ENCODE measurements at regions of chr2 and their contacts with region 1.

Region 1: DNA sequence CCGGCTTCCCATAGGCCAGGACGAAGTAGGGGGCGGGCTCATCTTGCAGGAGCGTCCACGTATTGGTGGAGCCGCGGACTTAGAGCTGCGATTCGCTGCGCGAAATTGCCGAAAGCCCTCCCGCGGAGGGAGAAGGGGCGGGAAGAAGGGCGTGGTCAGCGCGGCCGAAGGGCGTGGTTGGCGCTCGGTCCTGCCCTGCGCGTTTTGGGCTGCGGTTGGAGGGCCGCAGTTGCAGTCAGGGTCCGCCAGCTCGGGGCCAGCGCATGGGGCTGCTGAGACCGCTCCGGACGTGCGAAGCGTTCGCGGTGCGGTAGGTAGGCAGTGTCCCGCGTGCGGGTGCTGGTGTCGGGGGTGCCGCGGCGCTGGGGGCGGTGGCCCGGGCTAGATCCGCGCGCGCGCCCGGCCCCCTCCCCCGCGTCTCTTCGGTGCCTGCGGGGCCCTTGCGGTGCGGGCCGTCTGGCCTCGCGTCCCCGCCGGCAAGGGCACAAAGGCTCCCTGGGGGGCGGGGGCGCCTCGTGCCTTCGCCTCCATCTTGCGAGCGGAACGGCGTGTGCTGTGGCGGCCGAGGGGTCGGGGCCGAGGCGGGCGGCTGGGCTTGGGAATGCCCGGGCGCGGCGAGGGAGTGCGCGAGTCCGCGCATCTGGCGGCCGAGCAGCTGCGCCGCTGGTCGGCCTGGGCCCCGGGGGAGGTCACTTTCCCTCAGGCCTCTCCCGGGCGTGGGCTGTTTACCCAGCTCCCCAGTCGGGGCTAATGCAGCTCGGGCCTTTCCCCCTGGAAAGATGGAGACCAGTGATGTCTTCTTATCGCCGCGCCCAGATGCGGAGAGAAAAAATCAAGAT is at the start of gene CEP68:
- DNase-seq: peak; percentile 97 to 98
- H3K4me3 ChIP-seq: peak within 1 kb of the TSS; percentile 89 to 99
- H3K27ac ChIP-seq: peak within 1 kb of the TSS; percentile 84 to 91
- H3K4me1 ChIP-seq: peaks cover 0 to 50% (median 26%) of the 10 kb centered on the region in 4 donors
- H3K27me3 ChIP-seq: no peaks in the 10 kb centered on the region
- CTCF ChIP-seq: no peak

Region 2: DNA sequence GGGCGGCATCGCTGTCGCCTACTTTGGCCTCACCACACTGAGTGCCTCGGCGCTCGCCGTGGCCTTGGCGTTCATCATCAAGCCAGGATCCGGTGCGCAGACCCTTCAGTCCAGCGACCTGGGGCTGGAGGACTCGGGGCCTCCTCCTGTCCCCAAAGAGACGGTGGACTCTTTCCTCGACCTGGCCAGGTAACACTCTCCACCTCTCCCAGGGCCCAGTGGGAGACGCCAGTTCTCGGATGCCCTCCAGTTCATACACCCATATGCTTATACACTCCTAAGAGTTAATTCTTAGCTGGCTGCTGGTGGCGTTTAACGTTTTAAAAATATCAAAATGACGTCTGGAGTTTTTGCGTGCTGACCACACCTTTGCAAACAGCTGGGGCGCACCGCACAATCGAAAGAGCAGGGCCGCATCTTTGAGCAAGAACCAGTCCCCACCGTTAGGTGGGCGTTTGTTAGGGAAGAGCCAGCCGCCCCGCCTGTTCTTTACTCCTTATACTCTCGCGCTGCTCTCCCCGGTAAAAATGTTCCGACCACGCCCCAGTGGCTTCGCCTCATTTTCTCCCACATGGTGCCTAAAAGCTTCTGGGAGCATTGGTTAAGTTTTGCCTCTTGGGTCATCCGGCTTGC is 66.3 kb before region 1 on chr2:
- intact Hi-C with region 1: loop called (anchors 10 kb)
- DNase-seq: peak; percentile 23 to 69
- H3K4me3 ChIP-seq: peak overlapping the region; percentile 75 to 90
- H3K27ac ChIP-seq: peak overlapping the region; percentile 82 to 94
- H3K4me1 ChIP-seq: peaks cover 0 to 52% (median 31%) of the 10 kb centered on the region in 4 donors
- H3K27me3 ChIP-seq: no peaks in the 10 kb centered on the region
- CTCF ChIP-seq: no peak

Region 3: GRCh38 chr2:65129826-65130663 is 73.6 kb after region 1 on chr2 and contains the start of gene RAB1A:
- intact Hi-C with region 1: loop called (anchors 2 kb)
- DNase-seq: peak; percentile 99 to 100
- H3K4me3 ChIP-seq: peak within 1 kb of the TSS; percentile 89 to 90
- H3K27ac ChIP-seq: peak within 1 kb of the TSS; percentile 99
- H3K4me1 ChIP-seq: peaks cover 0 to 44% (median 22%) of the 10 kb centered on the region in 4 donors
- H3K27me3 ChIP-seq: no peaks in the 10 kb centered on the region
- CTCF ChIP-seq: peak in 1 of 2 experiments; percentile 49

Measured in tibial artery (tissue), 4 donors.